ENCODE measurements at regions of chr14 and their contacts with region 1.

Region 1: DNA sequence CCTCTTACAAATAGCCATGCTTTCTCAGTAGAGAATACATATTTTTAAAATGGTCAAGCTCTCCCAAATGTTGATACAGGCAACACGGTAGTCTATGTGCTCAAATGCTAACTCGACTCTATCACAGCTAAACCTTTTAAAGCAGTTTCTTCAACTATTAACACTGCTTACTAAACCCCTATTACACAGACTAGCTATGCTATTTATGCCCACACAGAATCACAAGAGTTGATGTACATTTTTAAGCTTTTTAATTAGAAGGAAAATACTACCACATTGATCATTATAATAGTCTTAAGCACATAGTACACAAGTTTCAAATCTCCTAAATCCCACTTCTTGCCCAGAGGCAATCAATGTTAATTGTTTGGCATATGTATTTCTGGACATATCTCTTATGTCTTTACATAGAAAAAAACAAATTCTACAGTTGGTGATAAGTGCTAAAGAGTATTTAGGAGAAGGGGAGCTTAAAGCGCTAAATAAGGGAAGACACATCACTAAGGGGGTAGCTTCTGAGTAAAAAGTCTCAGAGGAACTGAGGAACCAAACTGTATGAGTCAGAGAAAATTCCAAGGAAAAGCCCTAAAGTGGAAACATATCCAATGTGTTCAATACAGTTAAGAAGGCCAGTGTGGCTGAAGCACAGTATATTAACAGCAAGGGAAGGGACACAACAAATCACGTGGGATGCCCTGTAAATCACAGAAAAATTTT is 13.7 kb downstream of the HNRNPC start:
- DNase-seq: no peak
- H3K4me3 ChIP-seq: no peak overlapping the region
- H3K4me3 Mint-ChIP-seq: peak overlapping the region; percentile 20 to 84 (median 67)
- H3K27ac ChIP-seq: no peak overlapping the region
- H3K27ac Mint-ChIP-seq: peak overlapping the region; percentile 3 to 80 (median 56)
- H3K4me1 ChIP-seq: peaks cover 65% of the 10 kb centered on the region
- H3K4me1 Mint-ChIP-seq: peaks cover 77 to 92% (median 82%) of the 10 kb centered on the region in 3 donors
- H3K27me3 ChIP-seq: no peaks in the 10 kb centered on the region
- H3K27me3 Mint-ChIP-seq: no peaks in the 10 kb centered on the region

Region 2: GRCh38 chr14:21081521-21082142 is 173.9 kb before region 1 on chr14:
- CTCF ChIA-PET with region 1: no interaction called
- POLR2A ChIA-PET with region 1: no interaction called
- DNase-seq: no peak
- H3K4me3 ChIP-seq: no peak overlapping the region
- H3K4me3 Mint-ChIP-seq: no peak overlapping the region
- H3K27ac ChIP-seq: no peak overlapping the region
- H3K27ac Mint-ChIP-seq: no peak overlapping the region
- H3K4me1 ChIP-seq: peaks cover under 1% of the 10 kb centered on the region
- H3K4me1 Mint-ChIP-seq: peaks cover 3 to 8% (median 4%) of the 10 kb centered on the region in 3 donors
- H3K27me3 ChIP-seq: no peaks in the 10 kb centered on the region
- H3K27me3 Mint-ChIP-seq: peaks cover 3 to 8% of the 10 kb centered on the region in 2 donors

Region 3: DNA sequence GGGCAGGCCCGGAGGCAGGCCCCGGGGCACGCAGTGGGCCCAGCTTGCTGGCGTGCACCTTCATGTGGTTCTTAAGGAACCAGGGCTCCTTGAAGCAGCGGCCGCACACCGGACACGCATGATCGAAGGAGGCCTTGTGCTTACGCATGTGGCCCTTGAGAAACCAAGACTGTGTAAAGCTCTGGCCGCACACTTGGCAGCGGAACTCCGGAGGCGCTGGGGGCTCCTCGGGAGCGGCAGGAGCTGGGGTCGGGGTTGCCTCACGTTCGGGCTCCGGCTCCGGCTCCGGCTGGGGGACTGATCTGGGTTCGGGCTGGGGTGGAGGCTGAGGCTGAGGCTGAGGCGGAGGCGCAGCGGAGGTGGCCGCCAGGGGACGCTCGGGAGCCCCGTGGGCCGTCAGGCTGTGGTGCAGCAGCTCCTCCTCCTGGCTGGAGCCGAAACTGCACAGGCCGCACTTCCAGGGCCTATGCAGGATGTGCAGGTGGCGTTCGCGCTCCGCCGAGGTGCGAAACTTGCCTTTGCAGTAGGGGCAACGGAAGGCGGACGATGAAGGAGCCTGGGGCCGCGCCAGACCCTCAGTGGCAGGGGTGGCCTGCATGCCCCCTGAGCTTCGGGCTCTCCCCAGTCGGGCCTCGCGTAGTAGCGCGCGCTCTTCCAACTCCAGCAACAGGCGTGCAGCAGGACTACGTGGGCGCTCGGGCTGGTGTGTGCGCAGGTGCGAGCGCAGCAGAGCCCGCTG is 163.1 kb before region 1 on chr14:
- CTCF ChIA-PET with region 1: no interaction called
- POLR2A ChIA-PET with region 1: no interaction called
- DNase-seq: peak; percentile 86 to 93 (median 88)
- H3K4me3 ChIP-seq: no peak overlapping the region
- H3K4me3 Mint-ChIP-seq: no peak overlapping the region
- H3K27ac ChIP-seq: no peak overlapping the region
- H3K27ac Mint-ChIP-seq: peak overlapping the region in 7 of 8 donors; percentile 52 to 94 (median 86)
- H3K4me1 ChIP-seq: peaks cover 9% of the 10 kb centered on the region
- H3K4me1 Mint-ChIP-seq: peaks cover 19 to 34% (median 23%) of the 10 kb centered on the region in 3 donors
- H3K27me3 ChIP-seq: no peaks in the 10 kb centered on the region
- H3K27me3 Mint-ChIP-seq: no peaks in the 10 kb centered on the region

Region 4: DNA sequence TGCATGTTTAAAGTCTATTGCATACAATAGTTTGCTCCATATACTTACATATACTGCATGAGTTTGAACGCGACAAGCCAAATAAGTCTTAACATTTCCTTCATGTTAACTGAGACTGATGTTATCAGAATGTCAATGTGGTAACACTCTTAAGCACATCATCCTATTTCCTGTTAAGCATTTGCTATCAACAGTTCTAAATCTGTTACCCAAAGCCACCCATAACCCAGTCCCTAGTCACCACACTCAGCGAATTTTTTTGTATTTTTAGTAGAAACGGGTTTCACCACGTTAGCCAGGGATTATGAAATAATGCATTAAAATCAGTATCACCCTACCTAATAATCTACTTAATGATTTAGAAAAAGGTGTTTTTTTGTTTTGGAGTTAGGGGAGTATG is 25.7 kb before region 1 on chr14:
- CTCF ChIA-PET with region 1: interaction called, 10 read pairs
- POLR2A ChIA-PET with region 1: interaction called, 5 read pairs
- DNase-seq: peak in 2 of 5 donors; percentile 58 to 67
- H3K4me3 ChIP-seq: no peak overlapping the region
- H3K4me3 Mint-ChIP-seq: peak overlapping the region; percentile 60 to 87 (median 76)
- H3K27ac ChIP-seq: peak overlapping the region; percentile 29
- H3K27ac Mint-ChIP-seq: peak overlapping the region; percentile 85 to 97 (median 91)
- H3K4me1 ChIP-seq: peaks cover 70% of the 10 kb centered on the region
- H3K4me1 Mint-ChIP-seq: peaks cover 67 to 84% (median 78%) of the 10 kb centered on the region in 3 donors
- H3K27me3 ChIP-seq: no peaks in the 10 kb centered on the region
- H3K27me3 Mint-ChIP-seq: no peaks in the 10 kb centered on the region

Region 5: GRCh38 chr14:21268617-21269251 is 13.2 kb after region 1 on chr14:
- CTCF ChIA-PET with region 1: interaction called, 6 read pairs
- POLR2A ChIA-PET with region 1: interaction called, 10 read pairs
- DNase-seq: peak in 3 of 5 donors; percentile 37 to 58 (median 52)
- H3K4me3 ChIP-seq: peak overlapping the region; percentile 94
- H3K4me3 Mint-ChIP-seq: peak overlapping the region; percentile 97 to 100 (median 99)
- H3K27ac ChIP-seq: peak overlapping the region; percentile 89
- H3K27ac Mint-ChIP-seq: peak overlapping the region; percentile 96 to 100 (median 100)
- H3K4me1 ChIP-seq: peaks cover 44% of the 10 kb centered on the region
- H3K4me1 Mint-ChIP-seq: peaks cover 45 to 48% (median 47%) of the 10 kb centered on the region in 3 donors
- H3K27me3 ChIP-seq: no peaks in the 10 kb centered on the region
- H3K27me3 Mint-ChIP-seq: peaks cover 0 to 4% of the 10 kb centered on the region in 2 donors

Measured in CD8-positive, alpha-beta memory T cell (primary cell).